GM12878 (cell line): ENCODE measurements at regions of chr1 and their contacts with region 1.

Region 1: DNA sequence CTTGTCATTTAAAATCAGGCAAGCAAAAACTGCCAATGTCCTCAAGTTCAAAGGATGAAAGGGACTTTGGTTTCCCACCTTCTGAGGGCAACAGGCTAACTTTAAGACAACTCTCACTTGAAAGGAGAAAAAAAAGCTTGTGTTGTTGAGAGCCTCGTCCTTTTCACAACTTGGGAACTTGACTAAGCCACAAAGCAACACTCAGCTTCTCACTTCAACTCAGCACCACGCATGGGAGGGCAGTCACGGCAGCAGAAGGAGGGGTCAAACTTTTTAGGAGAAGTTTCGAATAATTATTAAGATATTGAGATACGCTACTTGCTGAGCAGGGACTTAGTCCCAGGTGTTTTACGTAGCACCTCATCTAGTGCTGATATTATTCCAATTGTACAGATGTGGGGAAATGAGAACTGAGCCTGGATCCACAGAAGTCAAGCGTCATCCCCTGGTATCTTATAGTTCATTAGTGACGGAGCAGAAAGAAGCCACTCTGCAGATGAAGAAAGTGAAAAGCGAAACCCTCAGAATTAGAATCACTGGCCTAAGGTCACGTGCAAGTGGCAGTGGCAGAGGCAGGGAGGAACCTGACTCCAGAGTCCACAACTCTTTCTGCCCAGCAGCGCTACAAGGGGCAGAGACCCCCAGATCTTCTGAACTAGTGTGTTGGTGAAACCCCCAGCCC is 83.6 kb downstream of the JAK1 start:
- DNase-seq: no peak
- ATAC-seq: peak; percentile 95
- H3K4me3 ChIP-seq: peak overlapping the region; percentile 11; the same call in 1 of the 2 replicates
- H3K27ac ChIP-seq: peak overlapping the region; percentile 60
- H3K4me1 ChIP-seq: peaks cover 30% of the 10 kb centered on the region
- H3K27me3 ChIP-seq: no peaks in the 10 kb centered on the region
- CTCF ChIP-seq: no peak
- EP300 ChIP-seq: no peak; a peak in 1 of 4 replicates
- POLR2A ChIP-seq: no peak
- RAD21 ChIP-seq: 0 out of 2 replicates have a peak, but pooled peaks have one; percentile 1

Region 2: GRCh38 chr1:64898107-64898845 is 15.6 kb after region 1 on chr1:
- CTCF ChIA-PET with region 1: interaction called, 3 read pairs
- POLR2A ChIA-PET with region 1: interaction called, 3 read pairs
- RAD21 ChIA-PET with region 1: no interaction called
- SMC1A ChIA-PET with region 1: interaction called, 17 read pairs
- in situ Hi-C with region 1: no loop called
- intact Hi-C with region 1: loop called (anchors 1 kb)
- DNase-seq: no peak
- ATAC-seq: peak; percentile 66
- H3K4me3 ChIP-seq: 0 out of 2 replicates have a peak overlapping the region, but pooled peaks have one; percentile 28
- H3K27ac ChIP-seq: peak overlapping the region; percentile 82
- H3K4me1 ChIP-seq: peaks cover 47% of the 10 kb centered on the region
- H3K27me3 ChIP-seq: no peaks in the 10 kb centered on the region
- CTCF ChIP-seq: no peak
- EP300 ChIP-seq: no peak
- POLR2A ChIP-seq: no peak
- RAD21 ChIP-seq: no peak

Region 3: GRCh38 chr1:64960731-64961130 is 78.0 kb after region 1 on chr1:
- CTCF ChIA-PET with region 1: no interaction called
- POLR2A ChIA-PET with region 1: no interaction called
- RAD21 ChIA-PET with region 1: no interaction called
- SMC1A ChIA-PET with region 1: interaction called, 5 read pairs
- in situ Hi-C with region 1: no loop called
- intact Hi-C with region 1: loop called (anchors 2 kb)
- DNase-seq: peak; percentile 85
- ATAC-seq: peak; percentile 79
- H3K4me3 ChIP-seq: peak overlapping the region; percentile 41
- H3K27ac ChIP-seq: peak overlapping the region; percentile 43
- H3K4me1 ChIP-seq: peaks cover 54% of the 10 kb centered on the region
- H3K27me3 ChIP-seq: no peaks in the 10 kb centered on the region
- CTCF ChIP-seq: no peak
- EP300 ChIP-seq: peak in 1 of 2 experiments; percentile 59; a peak in 1 of 4 replicates
- POLR2A ChIP-seq: no peak
- RAD21 ChIP-seq: no peak

Region 4: GRCh38 chr1:65056234-65056633 is 173.5 kb after region 1 on chr1:
- CTCF ChIA-PET with region 1: no interaction called
- POLR2A ChIA-PET with region 1: no interaction called
- RAD21 ChIA-PET with region 1: no interaction called
- SMC1A ChIA-PET with region 1: no interaction called
- in situ Hi-C with region 1: no loop called
- intact Hi-C with region 1: no loop called
- DNase-seq: no peak
- ATAC-seq: no peak; the same call in 2 of the 3 replicates
- H3K4me3 ChIP-seq: no peak overlapping the region
- H3K27ac ChIP-seq: no peak overlapping the region
- H3K4me1 ChIP-seq: no peaks in the 10 kb centered on the region
- H3K27me3 ChIP-seq: no peaks in the 10 kb centered on the region; a peak in 1 of 4 replicates
- CTCF ChIP-seq: no peak
- EP300 ChIP-seq: no peak
- POLR2A ChIP-seq: no peak
- RAD21 ChIP-seq: no peak